A549 (cell line): ENCODE measurements at regions of chr5 and their contacts with region 1.

Region 1: GRCh38 chr5:174910245-174910737 is 185.9 kb downstream of the MSX2 start:
- DNase-seq: peak; percentile 58 to 82
- ATAC-seq: peak; percentile 98 to 100
- H3K4me3 ChIP-seq: 0 out of 3 replicates have a peak overlapping the region, but pooled peaks have one; percentile 9
- H3K27ac ChIP-seq: no peak overlapping the region
- H3K4me1 ChIP-seq: no peaks in the 10 kb centered on the region
- CTCF ChIP-seq: peak; percentile 85
- EP300 ChIP-seq: no peak
- POLR2A ChIP-seq: no peak
- RAD21 ChIP-seq: peak; percentile 91

Region 2: GRCh38 chr5:174895363-174895762 is 14.9 kb before region 1 on chr5:
- CTCF ChIA-PET with region 1: interaction called, 19 read pairs
- POLR2A ChIA-PET with region 1: no interaction called
- DNase-seq: no peak
- ATAC-seq: no peak
- H3K4me3 ChIP-seq: no peak overlapping the region
- H3K27ac ChIP-seq: no peak overlapping the region
- H3K4me1 ChIP-seq: no peaks in the 10 kb centered on the region
- CTCF ChIP-seq: no peak
- EP300 ChIP-seq: no peak
- POLR2A ChIP-seq: no peak
- RAD21 ChIP-seq: no peak

Region 3: GRCh38 chr5:174920906-174921550 is 10.7 kb after region 1 on chr5:
- CTCF ChIA-PET with region 1: interaction called, 26 read pairs
- POLR2A ChIA-PET with region 1: no interaction called
- DNase-seq: no peak
- ATAC-seq: no peak
- H3K4me3 ChIP-seq: no peak overlapping the region
- H3K27ac ChIP-seq: no peak overlapping the region
- H3K4me1 ChIP-seq: no peaks in the 10 kb centered on the region
- CTCF ChIP-seq: no peak
- EP300 ChIP-seq: no peak
- POLR2A ChIP-seq: no peak
- RAD21 ChIP-seq: no peak

Region 4: DNA sequence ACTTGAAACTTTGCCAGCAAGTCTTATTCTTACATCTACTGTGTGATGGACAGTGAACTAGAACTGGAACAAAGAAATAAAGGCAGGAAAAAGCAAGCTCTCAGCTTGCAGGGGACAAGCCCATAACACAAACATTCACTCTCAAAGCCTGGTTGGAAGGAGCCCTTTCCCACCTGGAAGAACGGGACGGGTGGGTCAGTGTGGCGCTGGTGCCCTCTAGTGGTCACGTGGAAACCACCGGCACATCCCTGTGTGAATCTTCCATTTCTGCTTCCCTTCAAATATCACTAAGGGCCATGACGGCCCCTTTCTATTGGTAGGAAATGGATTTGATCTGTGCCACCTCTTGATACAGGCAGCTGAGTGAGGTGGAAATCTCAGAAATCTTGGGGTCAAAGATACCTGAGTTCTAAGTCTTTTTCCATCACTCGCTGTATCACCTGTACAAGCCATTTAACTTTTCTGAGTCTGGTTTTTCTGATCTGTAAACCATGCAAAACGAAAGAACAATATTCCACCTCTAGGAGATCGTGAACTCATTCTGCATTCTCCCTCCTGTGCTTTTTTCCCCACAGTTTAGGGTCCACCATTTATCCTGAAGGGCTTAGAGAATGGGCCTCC is 25.7 kb after region 1 on chr5:
- CTCF ChIA-PET with region 1: interaction called, 58 read pairs
- POLR2A ChIA-PET with region 1: no interaction called
- DNase-seq: peak; percentile 57 to 68
- ATAC-seq: peak; percentile 93 to 97
- H3K4me3 ChIP-seq: no peak overlapping the region
- H3K27ac ChIP-seq: no peak overlapping the region
- H3K4me1 ChIP-seq: no peaks in the 10 kb centered on the region
- CTCF ChIP-seq: peak; percentile 88
- EP300 ChIP-seq: no peak
- POLR2A ChIP-seq: no peak
- RAD21 ChIP-seq: peak; percentile 90 to 91

Region 5: DNA sequence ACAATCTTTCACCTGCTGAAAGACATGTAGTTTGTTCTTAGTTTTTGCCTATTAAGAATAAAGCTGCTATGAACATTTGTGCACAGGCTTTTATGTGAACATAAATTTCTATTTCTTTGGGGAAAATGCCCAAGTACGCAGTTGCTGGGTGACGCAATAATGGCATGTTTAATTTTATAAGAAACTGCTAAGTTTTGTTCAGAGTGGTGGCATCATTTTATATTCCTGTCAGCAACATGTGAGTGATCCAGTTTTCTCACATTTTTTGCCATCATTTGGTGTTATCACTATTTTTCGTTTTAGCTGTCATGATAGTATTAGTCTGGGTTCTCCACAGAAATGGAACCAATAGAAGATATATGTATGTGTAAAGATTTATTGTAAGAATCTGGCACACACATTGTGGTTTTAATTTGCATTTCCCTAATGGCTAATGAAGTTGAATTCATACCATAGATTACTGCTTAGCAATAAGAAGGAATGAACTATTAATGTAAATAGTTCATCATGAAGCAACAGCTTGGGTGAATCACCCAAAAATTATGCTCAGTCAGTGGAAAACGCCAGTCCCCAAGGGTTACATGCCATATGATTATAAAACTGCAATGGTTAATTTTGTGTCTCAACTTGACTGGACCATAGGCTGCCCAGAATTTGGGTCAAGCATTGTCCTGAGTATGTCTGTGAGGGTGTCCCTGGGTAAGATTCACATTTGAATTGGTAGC is 172.7 kb after region 1 on chr5:
- CTCF ChIA-PET with region 1: no interaction called
- POLR2A ChIA-PET with region 1: no interaction called
- DNase-seq: no peak
- ATAC-seq: no peak
- H3K4me3 ChIP-seq: no peak overlapping the region
- H3K27ac ChIP-seq: no peak overlapping the region
- H3K4me1 ChIP-seq: peaks cover 14% of the 10 kb centered on the region
- CTCF ChIP-seq: no peak
- EP300 ChIP-seq: no peak
- POLR2A ChIP-seq: no peak
- RAD21 ChIP-seq: no peak

Region 6: DNA sequence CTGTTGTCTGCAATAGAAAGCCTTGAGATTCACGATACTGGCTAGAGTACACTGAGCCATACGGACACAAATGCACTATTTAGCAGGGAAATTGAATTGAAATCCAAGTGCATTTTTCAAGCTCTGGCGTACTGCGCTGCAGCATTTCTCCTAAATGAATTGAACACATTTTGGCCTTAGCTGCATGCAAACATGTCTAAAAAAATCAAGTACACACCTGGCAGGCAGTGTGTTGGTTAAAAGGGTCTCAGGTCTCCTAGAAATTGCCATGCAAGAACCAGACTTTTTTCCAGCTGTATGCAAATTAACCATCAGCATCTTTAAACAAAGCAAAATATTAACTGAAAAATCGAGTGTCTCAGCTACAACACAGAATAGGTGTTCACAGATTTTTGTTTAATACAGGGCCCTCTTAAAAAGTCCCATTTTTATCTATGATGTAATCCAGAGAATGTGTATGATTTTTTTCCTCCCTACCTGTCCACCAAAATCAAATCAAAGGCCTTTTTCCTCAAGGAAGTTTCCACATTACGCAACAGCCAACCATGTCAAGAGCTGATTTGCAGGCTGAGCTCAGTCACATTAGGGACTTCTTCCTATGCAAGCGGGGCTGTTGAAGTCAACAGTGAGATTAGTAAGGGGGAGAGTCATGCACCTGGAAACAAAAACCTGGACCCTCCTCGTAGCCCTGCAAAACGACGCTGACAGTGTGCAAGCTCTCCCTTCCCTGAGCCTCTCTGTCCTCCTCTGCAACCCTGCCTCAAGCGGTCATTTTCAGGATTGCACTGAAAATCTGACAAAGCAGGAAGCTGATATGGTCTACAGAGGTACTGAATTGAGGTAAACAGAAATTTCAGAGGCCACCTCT is 554.0 kb after region 1 on chr5:
- CTCF ChIA-PET with region 1: interaction called, 20 read pairs
- POLR2A ChIA-PET with region 1: no interaction called
- DNase-seq: peak; percentile 67
- ATAC-seq: peak; percentile 97 to 98
- H3K4me3 ChIP-seq: no peak overlapping the region
- H3K27ac ChIP-seq: peak overlapping the region in 1 of 2 experiments; percentile 56; a peak in 2 of 6 replicates
- H3K4me1 ChIP-seq: peaks cover 9% of the 10 kb centered on the region; the same call in 2 of the 3 replicates
- CTCF ChIP-seq: peak; percentile 53
- EP300 ChIP-seq: no peak
- POLR2A ChIP-seq: no peak
- RAD21 ChIP-seq: peak; percentile 30 to 55; a peak in 3 of 5 replicates